Heart right ventricle (tissue), 16 donors: ENCODE measurements at regions of chr4 and their contacts with region 1.

Region 1: DNA sequence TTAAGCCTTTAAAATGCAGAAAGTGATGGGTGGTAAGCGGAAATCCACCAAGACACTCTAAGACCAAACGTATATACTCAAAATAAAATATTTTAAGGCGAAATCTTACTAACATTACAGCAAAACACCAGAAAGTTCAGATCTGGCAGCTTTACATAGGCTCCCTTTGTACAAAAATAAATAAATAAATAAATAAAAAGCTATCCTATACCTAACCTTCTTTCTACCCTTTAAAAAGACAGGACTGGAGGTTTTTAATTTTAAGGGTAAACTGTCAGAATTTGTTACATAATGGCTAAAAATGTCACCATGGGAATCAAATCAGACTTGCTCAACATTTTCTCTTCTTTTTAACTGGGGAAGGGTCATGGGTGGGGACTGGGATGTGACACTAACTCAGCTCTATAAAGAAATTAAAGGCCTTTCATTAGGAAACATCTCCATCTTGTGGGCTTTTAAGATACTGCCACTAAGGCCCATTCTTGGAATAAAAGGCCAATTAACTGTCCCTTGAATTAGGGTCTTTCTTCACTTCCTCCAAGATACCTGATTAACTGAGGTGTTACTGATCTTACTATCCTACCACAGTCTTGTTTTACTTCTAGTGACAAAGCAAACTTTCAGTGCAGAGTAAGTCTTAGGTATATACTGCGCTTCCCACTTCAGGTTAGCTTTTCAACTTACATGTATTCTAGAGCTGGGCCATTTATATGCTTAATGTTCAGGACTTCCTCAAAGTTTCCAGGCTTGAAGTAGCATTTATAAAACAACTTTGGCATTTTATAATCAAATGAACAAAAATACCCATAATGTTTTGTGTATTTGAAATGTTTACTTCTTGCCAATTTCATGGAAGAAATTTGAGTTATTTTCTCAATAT is 13.3 kb downstream of the HNRNPD start:
- DNase-seq: no peak
- ATAC-seq: peak in 7 of 8 donors; percentile 51 to 73 (median 67)
- H3K4me3 ChIP-seq: no peak overlapping the region
- H3K27ac ChIP-seq: peak overlapping the region in 2 of 10 donors; percentile 7 to 49
- H3K4me1 ChIP-seq: peaks cover 0 to 95% (median 80%) of the 10 kb centered on the region in 9 donors
- H3K27me3 ChIP-seq: no peaks in the 10 kb centered on the region
- CTCF ChIP-seq: peak; percentile 30 to 75 (median 62)

Region 2: DNA sequence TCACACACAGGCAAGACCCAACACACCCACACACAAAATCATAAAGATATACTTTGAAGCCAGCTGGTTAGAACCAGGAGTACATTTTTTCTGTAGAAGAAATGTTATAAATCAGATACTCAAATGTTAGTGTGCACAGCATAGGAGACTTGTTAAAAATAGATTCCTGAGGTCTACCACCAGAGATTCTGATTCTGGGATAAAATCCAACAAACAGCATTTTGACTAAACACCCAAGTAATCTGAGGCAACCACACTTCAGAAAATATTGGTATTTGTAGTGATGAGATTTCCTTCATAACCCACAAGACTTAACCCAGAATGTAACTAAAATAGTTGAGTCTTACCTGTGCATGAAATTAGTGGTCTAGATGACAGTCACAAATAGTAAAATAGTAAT is 288.6 kb before region 1 on chr4:
- intact Hi-C with region 1: no loop called
- DNase-seq: no peak
- ATAC-seq: no peak
- H3K4me3 ChIP-seq: no peak overlapping the region
- H3K27ac ChIP-seq: no peak overlapping the region
- H3K4me1 ChIP-seq: no peaks in the 10 kb centered on the region
- H3K27me3 ChIP-seq: no peaks in the 10 kb centered on the region
- CTCF ChIP-seq: no peak

Region 3: GRCh38 chr4:82284858-82285805 is 75.4 kb before region 1 on chr4:
- intact Hi-C with region 1: loop called in 2 of 10 experiments (anchors 5 kb)
- DNase-seq: peak; percentile 99
- ATAC-seq: peak; percentile 99 to 100 (median 100)
- H3K4me3 ChIP-seq: peak overlapping the region in 9 of 10 donors; percentile 29 to 65 (median 51)
- H3K27ac ChIP-seq: peak overlapping the region in 8 of 10 donors; percentile 6 to 68 (median 48)
- H3K4me1 ChIP-seq: peaks cover 0 to 10% (median 4%) of the 10 kb centered on the region in 9 donors
- H3K27me3 ChIP-seq: no peaks in the 10 kb centered on the region
- CTCF ChIP-seq: peak; percentile 90 to 98 (median 96)

Region 4: DNA sequence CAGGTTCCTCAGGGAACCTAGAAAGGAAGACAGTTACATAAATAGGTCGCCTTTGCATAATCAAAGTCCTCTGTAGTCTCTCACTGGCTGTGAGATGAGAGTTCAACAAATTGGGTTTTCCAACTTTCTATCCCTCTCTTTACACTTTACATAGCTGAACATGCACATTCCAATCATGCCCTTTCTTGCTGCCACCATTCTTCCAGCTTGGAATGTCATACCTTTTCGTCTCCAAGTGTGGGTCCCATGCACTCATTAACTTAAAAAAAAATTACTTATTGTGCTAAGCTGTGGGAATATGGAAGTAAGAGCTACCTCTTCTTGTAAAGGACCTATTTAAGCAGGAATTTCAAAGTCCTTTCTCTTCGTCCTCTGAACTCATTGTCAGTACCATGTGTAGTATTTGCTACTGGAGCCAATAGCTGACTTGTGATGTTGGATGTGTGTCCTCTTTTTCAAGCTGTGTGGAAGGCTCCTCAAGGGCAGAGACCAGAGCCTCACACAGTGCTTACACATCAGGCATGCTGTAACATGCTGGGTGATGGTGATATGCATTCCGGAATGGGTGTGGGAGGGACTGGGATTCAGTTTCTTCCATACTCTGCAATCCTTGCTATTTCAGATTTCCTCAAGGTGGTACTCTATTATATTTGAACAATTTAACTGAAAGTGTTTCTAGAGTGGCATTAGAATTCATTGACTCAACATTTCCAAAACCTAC is 76.9 kb after region 1 on chr4:
- intact Hi-C with region 1: no loop called
- DNase-seq: no peak
- ATAC-seq: no peak
- H3K4me3 ChIP-seq: no peak overlapping the region
- H3K27ac ChIP-seq: no peak overlapping the region
- H3K4me1 ChIP-seq: peaks cover 0 to 14% (median 0%) of the 10 kb centered on the region in 9 donors
- H3K27me3 ChIP-seq: no peaks in the 10 kb centered on the region
- CTCF ChIP-seq: no peak

Region 5: GRCh38 chr4:82525395-82525831 is 164.9 kb after region 1 on chr4:
- intact Hi-C with region 1: no loop called
- DNase-seq: no peak
- ATAC-seq: no peak
- H3K4me3 ChIP-seq: no peak overlapping the region
- H3K27ac ChIP-seq: no peak overlapping the region
- H3K4me1 ChIP-seq: peaks cover 0 to 5% (median 0%) of the 10 kb centered on the region in 9 donors
- H3K27me3 ChIP-seq: no peaks in the 10 kb centered on the region
- CTCF ChIP-seq: no peak